PC-3 (cell line): ENCODE measurements at regions of chr1 and their contacts with region 1.

Region 1: GRCh38 chr1:217089361-217090014 is 366.3 kb upstream of the ESRRG start:
- DNase-seq: peak; percentile 82
- ATAC-seq: peak; percentile 90
- H3K4me3 ChIP-seq: peak overlapping the region; percentile 84
- H3K27ac ChIP-seq: peak overlapping the region; percentile 54
- H3K4me1 ChIP-seq: peaks cover 17% of the 10 kb centered on the region
- H3K27me3 ChIP-seq: no peaks in the 10 kb centered on the region
- CTCF ChIP-seq: no peak

Region 2: DNA sequence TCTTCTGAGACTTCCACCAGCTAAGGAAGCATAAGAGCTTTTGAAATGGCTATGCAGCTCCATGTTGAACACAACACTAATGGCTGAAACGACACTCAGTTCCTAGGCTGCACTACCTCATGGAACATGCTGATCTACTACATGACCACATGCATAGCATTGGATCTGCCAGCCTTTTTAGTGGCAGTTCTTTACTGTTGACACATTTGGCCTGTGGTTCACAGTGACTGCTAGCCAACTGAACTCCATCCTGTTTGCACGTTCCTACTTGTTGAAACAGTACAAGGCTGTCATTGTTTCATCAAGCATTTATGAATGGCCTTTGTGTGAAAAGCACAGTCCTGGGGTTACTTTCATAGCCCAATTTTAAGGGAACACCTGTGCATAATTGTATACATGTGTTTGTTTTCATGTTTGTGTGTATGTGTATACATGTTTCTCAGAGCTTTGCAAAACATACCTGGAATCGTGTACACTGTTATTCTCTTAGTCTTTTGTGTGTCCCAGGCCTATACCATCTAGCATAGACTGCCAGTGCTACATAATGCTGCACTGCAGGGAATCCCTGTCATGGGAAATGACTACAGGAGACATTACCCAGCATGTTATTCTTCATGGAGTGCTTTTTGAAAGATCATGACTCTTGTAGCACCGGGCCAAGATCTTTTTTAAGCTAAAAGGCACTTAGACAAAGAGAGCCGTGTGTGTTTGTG is 186.7 kb before region 1 on chr1:
- CTCF ChIA-PET with region 1: no interaction called
- POLR2A ChIA-PET with region 1: no interaction called
- intact Hi-C with region 1: loop called (anchors 2 kb)
- DNase-seq: peak; percentile 84
- ATAC-seq: peak; percentile 82
- H3K4me3 ChIP-seq: no peak overlapping the region
- H3K27ac ChIP-seq: peak overlapping the region; percentile 41
- H3K4me1 ChIP-seq: peaks cover 19% of the 10 kb centered on the region
- H3K27me3 ChIP-seq: no peaks in the 10 kb centered on the region
- CTCF ChIP-seq: no peak

Region 3: GRCh38 chr1:217275655-217276398 is 186.3 kb after region 1 on chr1:
- CTCF ChIA-PET with region 1: no interaction called
- POLR2A ChIA-PET with region 1: no interaction called
- intact Hi-C with region 1: loop called (anchors 5 kb)
- DNase-seq: peak; percentile 96
- ATAC-seq: peak; percentile 67
- H3K4me3 ChIP-seq: peak overlapping the region; percentile 50
- H3K27ac ChIP-seq: peak overlapping the region; percentile 92
- H3K4me1 ChIP-seq: peaks cover 48% of the 10 kb centered on the region
- H3K27me3 ChIP-seq: no peaks in the 10 kb centered on the region
- CTCF ChIP-seq: no peak

Region 4: GRCh38 chr1:217333939-217334338 is 244.5 kb after region 1 on chr1:
- CTCF ChIA-PET with region 1: interaction called, 3 read pairs
- POLR2A ChIA-PET with region 1: no interaction called
- intact Hi-C with region 1: loop called (anchors 2 kb)
- DNase-seq: peak; percentile 89
- ATAC-seq: peak; percentile 77
- H3K4me3 ChIP-seq: no peak overlapping the region
- H3K27ac ChIP-seq: no peak overlapping the region
- H3K4me1 ChIP-seq: no peaks in the 10 kb centered on the region
- H3K27me3 ChIP-seq: peaks cover 5% of the 10 kb centered on the region; the same call in 1 of the 2 replicates
- CTCF ChIP-seq: peak; percentile 98